ENCODE measurements at regions of chr9 and their contacts with region 1.

Region 1: GRCh38 chr9:97501177-97501971 is at the start of gene TMOD1:
- DNase-seq: no peak
- ATAC-seq: peak; percentile 73
- H3K4me3 ChIP-seq: peak within 1 kb of the TSS; percentile 86
- H3K27ac ChIP-seq: peak within 1 kb of the TSS; percentile 70
- H3K4me1 ChIP-seq: peaks cover 28% of the 10 kb centered on the region
- H3K27me3 ChIP-seq: no peaks in the 10 kb centered on the region
- CTCF ChIP-seq: peak; percentile 17 to 37 (median 27); a peak in 3 of 6 replicates
- EP300 ChIP-seq: no peak
- POLR2A ChIP-seq: peak; percentile 45; the same call in 1 of the 2 replicates
- RAD21 ChIP-seq: peak; percentile 39; the same call in 1 of the 2 replicates
- polyA plus RNA-seq, gene TMOD1: 11.1 to 16.9 TPM

Region 2: GRCh38 chr9:96818535-96818934 is 682.8 kb before region 1 on chr9:
- CTCF ChIA-PET with region 1: no interaction called
- POLR2A ChIA-PET with region 1: no interaction called
- RAD21 ChIA-PET with region 1: no interaction called
- SMC1A ChIA-PET with region 1: no interaction called
- in situ Hi-C with region 1: no loop called
- intact Hi-C with region 1: no loop called
- DNase-seq: no peak
- ATAC-seq: no peak
- H3K4me3 ChIP-seq: no peak overlapping the region
- H3K27ac ChIP-seq: no peak overlapping the region
- H3K4me1 ChIP-seq: no peaks in the 10 kb centered on the region
- H3K27me3 ChIP-seq: no peaks in the 10 kb centered on the region
- CTCF ChIP-seq: no peak
- EP300 ChIP-seq: no peak
- POLR2A ChIP-seq: no peak
- RAD21 ChIP-seq: no peak

Region 3: DNA sequence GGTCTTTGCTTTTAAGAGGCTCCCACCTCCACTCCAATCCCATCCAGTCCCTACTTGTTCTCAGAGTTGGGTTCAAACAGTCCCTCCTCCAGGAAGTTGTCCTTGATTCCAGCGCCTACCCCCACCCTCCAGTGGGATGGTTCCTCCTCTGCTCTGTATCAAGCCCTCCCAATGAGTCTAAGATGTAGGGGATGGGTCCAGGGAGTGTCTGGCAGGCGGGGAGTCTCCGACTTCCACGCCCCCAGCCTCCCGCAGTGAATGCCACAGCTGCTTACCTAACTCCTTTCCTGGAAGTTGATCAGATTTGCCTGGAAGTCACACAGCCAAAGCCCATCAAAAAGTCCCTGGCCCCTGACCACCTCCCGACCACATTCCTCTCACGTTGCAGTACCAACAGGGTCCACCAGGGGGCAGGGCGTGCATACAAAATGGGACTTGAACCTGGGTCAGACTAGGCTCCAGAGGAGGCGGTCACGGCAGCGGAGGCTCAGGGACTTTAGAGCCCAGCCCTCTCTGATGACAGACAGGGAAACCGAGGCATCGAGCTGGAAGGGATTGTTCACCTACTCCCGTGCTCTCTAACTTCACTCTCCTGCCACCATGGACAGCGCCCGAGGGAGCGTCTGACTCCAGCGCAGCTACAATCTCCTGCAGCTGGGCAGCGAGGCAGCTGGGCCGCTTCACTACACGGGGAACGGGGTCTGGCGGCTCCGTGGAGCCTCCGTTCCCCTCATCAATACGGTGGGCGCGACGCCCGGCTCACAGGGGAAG is 114.5 kb before region 1 on chr9:
- CTCF ChIA-PET with region 1: interaction called, 6 read pairs
- POLR2A ChIA-PET with region 1: no interaction called
- RAD21 ChIA-PET with region 1: interaction called, 19 read pairs
- SMC1A ChIA-PET with region 1: no interaction called
- in situ Hi-C with region 1: no loop called
- intact Hi-C with region 1: no loop called
- DNase-seq: no peak
- ATAC-seq: peak; percentile 44
- H3K4me3 ChIP-seq: no peak overlapping the region
- H3K27ac ChIP-seq: no peak overlapping the region
- H3K4me1 ChIP-seq: peaks cover 43% of the 10 kb centered on the region
- H3K27me3 ChIP-seq: no peaks in the 10 kb centered on the region
- CTCF ChIP-seq: peak; percentile 95 to 100 (median 98)
- EP300 ChIP-seq: no peak
- POLR2A ChIP-seq: no peak
- RAD21 ChIP-seq: peak; percentile 91

Region 4: DNA sequence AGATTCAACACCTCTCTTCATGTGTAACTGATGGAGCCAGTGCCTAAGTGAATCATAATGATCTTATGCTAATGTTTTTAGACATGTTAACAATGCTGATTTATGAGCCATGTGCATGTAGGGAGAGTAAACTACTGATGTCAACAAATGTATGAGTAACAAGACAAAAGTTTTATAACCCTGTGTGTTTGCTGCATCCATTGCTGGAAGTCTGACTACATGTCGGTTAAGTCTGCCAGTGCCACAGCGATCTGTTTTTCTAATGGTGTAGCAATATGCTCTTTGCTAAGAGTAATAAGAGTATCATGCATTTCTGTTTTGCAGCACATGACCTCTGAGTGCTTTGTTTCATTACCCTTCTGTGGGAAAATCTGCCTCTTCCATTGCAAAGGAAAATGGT is 26.3 kb before region 1 on chr9:
- CTCF ChIA-PET with region 1: interaction called, 247 read pairs
- POLR2A ChIA-PET with region 1: interaction called, 35 read pairs
- RAD21 ChIA-PET with region 1: interaction called, 144 read pairs
- SMC1A ChIA-PET with region 1: interaction called, 144 read pairs
- in situ Hi-C with region 1: no loop called
- intact Hi-C with region 1: no loop called
- DNase-seq: no peak
- ATAC-seq: no peak
- H3K4me3 ChIP-seq: no peak overlapping the region
- H3K27ac ChIP-seq: no peak overlapping the region
- H3K4me1 ChIP-seq: peaks cover under 1% of the 10 kb centered on the region; the same call in 1 of the 2 replicates
- H3K27me3 ChIP-seq: no peaks in the 10 kb centered on the region
- CTCF ChIP-seq: no peak
- EP300 ChIP-seq: no peak
- POLR2A ChIP-seq: no peak
- RAD21 ChIP-seq: no peak

Region 5: DNA sequence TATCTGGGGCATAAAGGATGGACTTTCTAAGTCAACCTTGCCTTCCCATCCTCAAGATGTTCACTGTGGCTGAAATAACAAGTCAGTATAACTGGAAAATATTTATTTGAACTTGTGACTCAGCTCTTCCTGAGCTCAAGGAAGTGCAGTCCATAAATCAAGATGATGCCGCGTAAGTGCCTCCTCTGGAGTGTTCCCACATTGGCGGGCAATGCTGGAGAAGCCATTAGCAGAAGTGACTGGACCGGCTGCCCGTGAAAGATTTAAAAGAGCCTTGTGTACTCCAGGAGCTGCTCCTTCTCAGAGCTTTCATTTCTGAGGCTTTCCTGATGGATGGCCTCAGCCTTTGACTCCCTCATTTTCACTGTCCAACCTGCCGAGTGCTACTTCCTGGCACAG is 17.5 kb after region 1 on chr9:
- CTCF ChIA-PET with region 1: interaction called, 19 read pairs
- POLR2A ChIA-PET with region 1: interaction called, 4 read pairs
- RAD21 ChIA-PET with region 1: interaction called, 3 read pairs
- SMC1A ChIA-PET with region 1: interaction called, 12 read pairs
- in situ Hi-C with region 1: no loop called
- intact Hi-C with region 1: no loop called
- DNase-seq: no peak
- ATAC-seq: no peak
- H3K4me3 ChIP-seq: no peak overlapping the region
- H3K27ac ChIP-seq: no peak overlapping the region
- H3K4me1 ChIP-seq: peaks cover 11% of the 10 kb centered on the region; the same call in 1 of the 2 replicates
- H3K27me3 ChIP-seq: no peaks in the 10 kb centered on the region
- CTCF ChIP-seq: no peak
- EP300 ChIP-seq: no peak
- POLR2A ChIP-seq: no peak
- RAD21 ChIP-seq: no peak

Region 6: DNA sequence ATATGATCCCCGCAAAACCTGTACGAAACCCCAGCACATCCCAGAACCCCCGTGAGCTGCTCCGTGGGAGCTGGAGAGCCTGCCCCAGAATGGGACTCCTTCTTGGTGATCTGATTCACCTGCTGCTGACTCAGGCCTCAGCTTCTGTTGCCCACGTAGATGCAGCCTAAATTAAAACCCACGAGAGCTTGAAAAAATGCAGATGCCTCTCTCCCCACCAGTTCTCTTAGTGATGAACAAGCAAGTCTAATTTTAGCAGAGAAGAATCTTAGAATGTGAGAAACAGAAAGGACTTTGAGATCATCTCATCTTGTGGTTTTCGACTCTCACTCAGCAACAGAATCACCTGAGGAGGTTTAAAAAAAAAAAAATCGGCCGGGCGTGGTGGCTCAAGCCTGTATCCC is 57.7 kb after region 1 on chr9:
- CTCF ChIA-PET with region 1: interaction called, 40 read pairs
- POLR2A ChIA-PET with region 1: interaction called, 30 read pairs
- RAD21 ChIA-PET with region 1: interaction called, 51 read pairs
- SMC1A ChIA-PET with region 1: interaction called, 80 read pairs
- in situ Hi-C with region 1: no loop called
- intact Hi-C with region 1: loop called (anchors 2 kb)
- DNase-seq: peak; percentile 85
- ATAC-seq: peak; percentile 90
- H3K4me3 ChIP-seq: peak overlapping the region; percentile 48; the same call in 1 of the 2 replicates
- H3K27ac ChIP-seq: peak overlapping the region; percentile 91
- H3K4me1 ChIP-seq: peaks cover 35% of the 10 kb centered on the region
- H3K27me3 ChIP-seq: no peaks in the 10 kb centered on the region
- CTCF ChIP-seq: no peak
- EP300 ChIP-seq: peak in 1 of 2 experiments; percentile 37; a peak in 1 of 4 replicates
- POLR2A ChIP-seq: 0 out of 2 replicates have a peak, but pooled peaks have one; percentile 38
- RAD21 ChIP-seq: no peak